ENCODE measurements at regions of chr11 and their contacts with region 1.

Region 1: DNA sequence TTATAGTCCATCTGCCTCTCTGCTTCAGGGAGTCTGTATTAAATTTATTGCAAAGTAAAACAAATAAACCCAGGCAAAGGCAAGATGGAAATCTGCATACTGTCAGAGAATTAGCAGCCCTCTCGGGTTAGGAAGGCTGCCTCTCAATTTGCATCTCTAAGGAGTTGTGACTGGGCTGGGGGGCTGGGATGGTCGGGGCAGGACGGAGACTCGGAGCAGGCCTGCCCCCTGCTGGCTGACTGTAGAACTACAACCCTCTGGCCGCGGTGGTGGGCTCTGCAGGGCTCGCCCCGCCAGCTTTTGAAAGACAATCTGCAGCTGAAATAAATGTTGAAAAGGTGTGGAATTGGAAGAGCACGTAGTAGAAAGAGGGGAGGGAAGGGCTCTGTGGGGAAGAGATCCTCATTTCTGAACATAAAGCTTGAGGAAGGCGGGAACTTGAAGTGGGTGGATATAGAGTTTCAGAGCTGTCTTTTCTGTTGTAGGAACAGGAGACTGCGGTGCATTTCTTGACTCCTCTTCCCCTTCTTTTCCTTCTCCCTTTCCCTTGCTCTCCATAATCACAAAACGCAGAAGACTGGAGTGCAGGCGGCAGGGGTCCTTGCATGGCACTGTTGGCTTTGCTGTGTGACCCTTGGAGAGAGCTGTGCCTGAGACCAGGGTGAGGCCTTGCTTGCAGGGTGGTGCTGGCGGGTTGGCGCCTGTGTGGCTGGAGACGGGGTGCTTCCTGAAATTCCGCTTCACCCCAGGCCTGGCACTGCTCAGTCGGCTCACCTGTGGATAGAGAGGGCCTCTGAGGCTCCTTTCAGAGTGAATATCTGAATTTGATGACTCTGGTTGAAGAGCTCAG is 22.6 kb upstream of the PKNOX2 start:
- DNase-seq: peak; percentile 87
- H3K4me3 ChIP-seq: peak overlapping the region in 1 of 8 donors; percentile 6
- H3K27ac ChIP-seq: no peak overlapping the region
- H3K4me1 ChIP-seq: peaks cover 4 to 16% (median 7%) of the 10 kb centered on the region in 6 donors
- H3K27me3 ChIP-seq: peaks cover 0 to 51% (median 7%) of the 10 kb centered on the region in 7 donors
- CTCF ChIP-seq: peak; percentile 84 to 97 (median 94)
- POLR2A ChIP-seq: no peak

Region 2: GRCh38 chr11:124970925-124971324 is 171.0 kb before region 1 on chr11:
- intact Hi-C with region 1: loop called (anchors 5 kb)
- DNase-seq: no peak
- H3K4me3 ChIP-seq: no peak overlapping the region
- H3K27ac ChIP-seq: no peak overlapping the region
- H3K4me1 ChIP-seq: no peaks in the 10 kb centered on the region
- H3K27me3 ChIP-seq: no peaks in the 10 kb centered on the region
- CTCF ChIP-seq: no peak
- POLR2A ChIP-seq: no peak

Region 3: GRCh38 chr11:125091247-125091876 is 50.5 kb before region 1 on chr11:
- intact Hi-C with region 1: loop called (anchors 10 kb)
- DNase-seq: peak; percentile 41
- H3K4me3 ChIP-seq: no peak overlapping the region
- H3K27ac ChIP-seq: peak overlapping the region in 3 of 8 donors; percentile 21 to 45 (median 26)
- H3K4me1 ChIP-seq: peaks cover 0 to 15% (median 10%) of the 10 kb centered on the region in 6 donors
- H3K27me3 ChIP-seq: no peaks in the 10 kb centered on the region
- CTCF ChIP-seq: peak; percentile 27 to 77 (median 59)
- POLR2A ChIP-seq: no peak

Region 4: GRCh38 chr11:126153972-126154371 is 1012.1 kb after region 1 on chr11:
- intact Hi-C with region 1: no loop called
- DNase-seq: peak; percentile 23
- H3K4me3 ChIP-seq: no peak overlapping the region
- H3K27ac ChIP-seq: no peak overlapping the region
- H3K4me1 ChIP-seq: peaks cover 0 to 15% (median 3%) of the 10 kb centered on the region in 6 donors
- H3K27me3 ChIP-seq: peaks cover 0 to 12% (median 0%) of the 10 kb centered on the region in 7 donors
- CTCF ChIP-seq: no peak
- POLR2A ChIP-seq: no peak